Testis (tissue), 5 donors: ENCODE measurements at regions of chr15 and their contacts with region 1.

Region 1: GRCh38 chr15:39188925-39189324 is 392.0 kb upstream of the THBS1 start:
- DNase-seq: no peak
- H3K4me3 ChIP-seq: no peak overlapping the region
- H3K27ac ChIP-seq: no peak overlapping the region
- H3K4me1 ChIP-seq: peaks cover 9% of the 10 kb centered on the region
- H3K27me3 ChIP-seq: no peaks in the 10 kb centered on the region
- CTCF ChIP-seq: no peak
- POLR2A ChIP-seq: no peak

Region 2: GRCh38 chr15:38905634-38906033 is 283.3 kb before region 1 on chr15:
- intact Hi-C with region 1: no loop called
- DNase-seq: no peak
- H3K4me3 ChIP-seq: no peak overlapping the region
- H3K27ac ChIP-seq: no peak overlapping the region
- H3K4me1 ChIP-seq: no peaks in the 10 kb centered on the region
- H3K27me3 ChIP-seq: no peaks in the 10 kb centered on the region
- CTCF ChIP-seq: no peak
- POLR2A ChIP-seq: no peak

Region 3: DNA sequence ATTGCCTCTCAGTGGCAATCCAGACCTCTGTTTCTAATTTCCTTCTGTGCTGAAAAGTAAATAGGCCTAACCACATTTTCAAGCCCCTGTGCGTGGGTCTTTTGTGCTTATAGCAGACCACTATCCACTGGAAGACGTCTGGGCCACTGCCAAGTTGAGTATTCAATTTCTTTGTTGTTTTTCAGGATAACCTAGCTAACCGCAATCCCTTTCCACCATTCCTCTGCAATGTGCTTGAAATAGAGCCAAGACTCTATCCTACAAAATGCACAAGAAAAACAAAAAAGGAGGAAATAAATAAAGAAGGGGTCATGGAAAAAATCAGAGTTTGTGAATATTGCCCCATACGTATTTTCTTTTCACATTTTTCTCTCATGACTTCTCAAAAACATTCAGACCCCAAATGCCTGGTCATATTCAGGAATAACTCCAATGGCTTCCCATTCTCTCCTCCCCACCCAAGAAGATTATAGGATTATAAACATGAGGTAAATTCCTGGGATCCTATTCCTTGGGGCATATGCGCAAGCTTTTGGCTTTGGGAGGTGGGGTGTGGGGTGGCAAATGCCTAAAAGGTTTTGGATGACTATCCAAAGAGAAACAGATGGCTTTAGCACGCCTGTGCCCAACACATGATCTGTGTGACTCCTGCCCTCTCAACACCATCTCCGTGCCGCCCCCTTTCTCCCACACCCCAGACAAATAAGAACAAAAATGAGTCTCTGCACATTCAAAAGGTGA is 174.1 kb after region 1 on chr15:
- intact Hi-C with region 1: no loop called
- DNase-seq: no peak
- H3K4me3 ChIP-seq: no peak overlapping the region
- H3K27ac ChIP-seq: no peak overlapping the region
- H3K4me1 ChIP-seq: peaks cover 4% of the 10 kb centered on the region
- H3K27me3 ChIP-seq: no peaks in the 10 kb centered on the region
- CTCF ChIP-seq: no peak
- POLR2A ChIP-seq: no peak

Region 4: DNA sequence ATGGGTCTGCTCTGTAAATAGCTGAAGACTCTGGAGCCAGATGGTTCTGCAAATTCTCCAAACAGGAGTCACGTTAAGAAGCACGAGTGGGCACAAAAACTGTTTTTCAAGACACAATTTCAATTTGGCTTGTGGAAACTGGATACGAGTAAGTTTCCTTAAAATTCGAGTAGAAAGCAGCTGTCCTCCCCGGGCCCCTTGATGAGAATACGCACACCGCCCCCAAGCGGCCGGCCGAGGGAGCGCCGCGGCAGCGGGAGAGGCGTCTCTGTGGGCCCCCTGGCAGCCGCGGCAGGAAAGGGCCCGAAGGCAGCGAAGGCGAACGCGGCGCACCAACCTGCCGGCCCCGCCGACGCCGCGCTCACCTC is 391.2 kb after region 1 on chr15:
- intact Hi-C with region 1: loop called (anchors 10 kb)
- DNase-seq: peak; percentile 96
- H3K4me3 ChIP-seq: peak overlapping the region; percentile 50 to 57
- H3K27ac ChIP-seq: peak overlapping the region; percentile 14 to 54
- H3K4me1 ChIP-seq: peaks cover 5% of the 10 kb centered on the region
- H3K27me3 ChIP-seq: no peaks in the 10 kb centered on the region
- CTCF ChIP-seq: peak; percentile 97 to 98 (median 97)
- POLR2A ChIP-seq: no peak